WTC11 (cell line): ENCODE measurements at regions of chr1 and their contacts with region 1.

Region 1: GRCh38 chr1:156060937-156061636 is at the start of gene RAB25:
- DNase-seq: peak; percentile 80
- ATAC-seq: peak; percentile 83
- H3K4me3 Mint-ChIP-seq: peak within 1 kb of the TSS; percentile 90
- H3K27ac Mint-ChIP-seq: peak within 1 kb of the TSS; percentile 98
- H3K4me1 Mint-ChIP-seq: peaks cover 37% of the 10 kb centered on the region
- H3K27me3 Mint-ChIP-seq: no peaks in the 10 kb centered on the region
- CTCF ChIP-seq: no peak
- total RNA-seq, gene RAB25: 61.9 to 82.8 TPM (median 82.5 TPM) in 3 replicates

Region 2: GRCh38 chr1:155970531-155971167 is 90.4 kb before region 1 on chr1:
- CTCF ChIA-PET with region 1: interaction called, 73 read pairs
- POLR2A ChIA-PET with region 1: interaction called, 6 read pairs
- DNase-seq: no peak
- ATAC-seq: peak; percentile 15
- H3K4me3 Mint-ChIP-seq: no peak overlapping the region
- H3K27ac Mint-ChIP-seq: peak overlapping the region; percentile 73
- H3K4me1 Mint-ChIP-seq: peaks cover 84% of the 10 kb centered on the region
- H3K27me3 Mint-ChIP-seq: no peaks in the 10 kb centered on the region
- CTCF ChIP-seq: no peak

Region 3: DNA sequence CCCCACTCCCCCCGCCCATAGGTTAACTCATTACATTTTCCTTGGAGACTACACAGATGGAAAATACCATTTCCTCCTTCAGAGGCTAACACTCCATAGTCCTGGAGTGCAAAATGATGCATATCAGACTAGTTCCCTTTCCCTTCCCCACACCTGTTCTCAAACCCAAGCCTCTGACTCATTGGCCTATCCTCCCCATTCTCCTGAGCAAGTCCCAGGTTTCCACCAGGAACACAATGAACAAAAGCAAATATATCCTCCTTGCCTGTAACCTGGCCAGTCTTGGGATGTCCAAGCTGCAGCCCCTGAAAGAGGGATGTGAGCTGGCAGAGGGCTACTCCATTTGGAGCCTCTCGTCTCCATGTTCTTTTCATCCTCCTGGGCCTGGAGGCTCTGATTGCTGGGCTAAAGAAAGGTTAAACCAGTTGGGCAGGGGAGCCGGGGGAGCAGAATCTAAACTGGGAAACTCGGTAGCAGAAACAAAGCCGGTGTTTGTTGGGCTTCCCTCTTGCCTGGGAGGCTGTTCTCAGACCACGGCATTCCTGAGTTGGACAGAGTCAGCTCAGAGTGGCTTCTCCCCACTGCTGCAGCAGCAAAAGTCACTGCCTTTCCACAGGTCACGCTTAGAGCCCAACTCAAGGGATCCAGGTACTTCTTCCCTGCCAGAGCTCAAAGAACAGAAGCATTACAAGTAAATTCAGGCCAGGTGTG is 54.3 kb before region 1 on chr1:
- CTCF ChIA-PET with region 1: interaction called, 19 read pairs
- POLR2A ChIA-PET with region 1: no interaction called
- DNase-seq: no peak
- ATAC-seq: no peak
- H3K4me3 Mint-ChIP-seq: no peak overlapping the region
- H3K27ac Mint-ChIP-seq: peak overlapping the region; percentile 37
- H3K4me1 Mint-ChIP-seq: peaks cover 2% of the 10 kb centered on the region; the same call in 1 of the 2 replicates
- H3K27me3 Mint-ChIP-seq: no peaks in the 10 kb centered on the region
- CTCF ChIP-seq: no peak

Region 4: GRCh38 chr1:156033011-156033410 is 28.1 kb before region 1 on chr1:
- CTCF ChIA-PET with region 1: interaction called, 36 read pairs
- POLR2A ChIA-PET with region 1: interaction called, 4 read pairs
- DNase-seq: no peak
- ATAC-seq: no peak
- H3K4me3 Mint-ChIP-seq: no peak overlapping the region
- H3K27ac Mint-ChIP-seq: no peak overlapping the region
- H3K4me1 Mint-ChIP-seq: no peaks in the 10 kb centered on the region
- H3K27me3 Mint-ChIP-seq: no peaks in the 10 kb centered on the region
- CTCF ChIP-seq: no peak

Region 5: DNA sequence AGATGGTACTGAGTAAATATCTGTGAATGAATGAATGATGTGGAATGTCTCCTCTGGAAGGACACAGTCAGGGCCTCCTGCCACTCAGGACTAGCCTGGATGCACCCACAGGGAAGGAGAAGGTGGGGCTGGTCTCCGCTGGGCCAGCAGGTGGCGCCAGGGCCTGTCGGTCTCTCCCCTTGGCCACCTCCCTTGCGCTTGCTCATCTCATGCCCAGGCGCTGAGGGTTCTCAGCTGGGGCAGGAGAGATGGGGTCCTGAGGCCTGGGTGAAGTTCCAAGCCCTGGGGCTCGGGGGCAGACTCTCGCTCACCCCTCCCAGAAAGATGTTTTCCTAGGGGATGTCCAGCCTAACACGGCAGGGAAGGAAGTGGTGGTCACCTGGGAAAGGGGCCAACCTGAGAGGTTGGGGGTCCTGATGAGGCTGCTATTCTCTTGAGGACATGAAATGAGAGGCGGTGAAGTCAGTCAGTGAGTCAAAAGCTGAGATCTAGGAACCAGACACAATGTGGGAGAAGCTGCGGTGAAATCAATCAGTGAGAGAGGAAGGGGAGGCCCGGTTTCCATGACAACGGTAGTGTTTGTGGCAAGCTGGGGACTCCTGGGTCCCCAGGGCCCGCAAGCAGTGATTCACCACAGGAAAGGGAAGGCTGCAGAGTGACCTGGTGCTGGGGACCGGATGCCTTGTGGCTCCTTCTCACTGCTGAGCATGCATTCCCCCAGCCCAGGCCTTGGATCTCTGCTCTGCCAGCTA is 35.7 kb after region 1 on chr1:
- CTCF ChIA-PET with region 1: interaction called, 16 read pairs
- POLR2A ChIA-PET with region 1: no interaction called
- DNase-seq: peak; percentile 92
- ATAC-seq: peak; percentile 94
- H3K4me3 Mint-ChIP-seq: no peak overlapping the region
- H3K27ac Mint-ChIP-seq: no peak overlapping the region
- H3K4me1 Mint-ChIP-seq: peaks cover 20% of the 10 kb centered on the region
- H3K27me3 Mint-ChIP-seq: no peaks in the 10 kb centered on the region
- CTCF ChIP-seq: peak; percentile 90